Ovary (tissue), 10 donors: ENCODE measurements at regions of chr20 and their contacts with region 1.

Region 1: GRCh38 chr20:58938541-58938940 is 42.5 kb upstream of the NELFCD start:
- DNase-seq: no peak
- H3K4me3 ChIP-seq: no peak overlapping the region
- H3K27ac ChIP-seq: no peak overlapping the region
- H3K4me1 ChIP-seq: no peaks in the 10 kb centered on the region
- H3K27me3 ChIP-seq: no peaks in the 10 kb centered on the region
- CTCF ChIP-seq: no peak
- EP300 ChIP-seq: no peak
- POLR2A ChIP-seq: no peak

Region 2: GRCh38 chr20:58995461-58996225 is 57.1 kb after region 1 on chr20:
- intact Hi-C with region 1: loop called in 1 of 4 experiments (anchors 5 kb)
- DNase-seq: no peak
- H3K4me3 ChIP-seq: no peak overlapping the region
- H3K27ac ChIP-seq: no peak overlapping the region
- H3K4me1 ChIP-seq: no peaks in the 10 kb centered on the region
- H3K27me3 ChIP-seq: no peaks in the 10 kb centered on the region
- CTCF ChIP-seq: no peak
- EP300 ChIP-seq: no peak
- POLR2A ChIP-seq: no peak

Region 3: GRCh38 chr20:59925939-59926338 is 987.4 kb after region 1 on chr20:
- intact Hi-C with region 1: no loop called
- DNase-seq: no peak
- H3K4me3 ChIP-seq: no peak overlapping the region
- H3K27ac ChIP-seq: no peak overlapping the region
- H3K4me1 ChIP-seq: no peaks in the 10 kb centered on the region
- H3K27me3 ChIP-seq: no peaks in the 10 kb centered on the region
- CTCF ChIP-seq: no peak
- EP300 ChIP-seq: no peak
- POLR2A ChIP-seq: no peak